Dorsolateral prefrontal cortex (tissue), 120 donors: ENCODE measurements at regions of chr1 and their contacts with region 1.

Region 1: GRCh38 chr1:116372587-116373444 is at the start of gene ATP1A1:
- DNase-seq: peak; percentile 96 to 99 (median 98)
- H3K4me3 ChIP-seq: peak within 1 kb of the TSS; percentile 53 to 97 (median 88)
- H3K27ac ChIP-seq: peak within 1 kb of the TSS; percentile 77 to 99 (median 95)
- H3K27me3 ChIP-seq: no peaks in the 10 kb centered on the region
- CTCF ChIP-seq: peak in 35 of 56 donors; percentile 3 to 51 (median 28)
- total RNA-seq, gene ATP1A1: 225 to 944 (median 658) TPM

Region 2: DNA sequence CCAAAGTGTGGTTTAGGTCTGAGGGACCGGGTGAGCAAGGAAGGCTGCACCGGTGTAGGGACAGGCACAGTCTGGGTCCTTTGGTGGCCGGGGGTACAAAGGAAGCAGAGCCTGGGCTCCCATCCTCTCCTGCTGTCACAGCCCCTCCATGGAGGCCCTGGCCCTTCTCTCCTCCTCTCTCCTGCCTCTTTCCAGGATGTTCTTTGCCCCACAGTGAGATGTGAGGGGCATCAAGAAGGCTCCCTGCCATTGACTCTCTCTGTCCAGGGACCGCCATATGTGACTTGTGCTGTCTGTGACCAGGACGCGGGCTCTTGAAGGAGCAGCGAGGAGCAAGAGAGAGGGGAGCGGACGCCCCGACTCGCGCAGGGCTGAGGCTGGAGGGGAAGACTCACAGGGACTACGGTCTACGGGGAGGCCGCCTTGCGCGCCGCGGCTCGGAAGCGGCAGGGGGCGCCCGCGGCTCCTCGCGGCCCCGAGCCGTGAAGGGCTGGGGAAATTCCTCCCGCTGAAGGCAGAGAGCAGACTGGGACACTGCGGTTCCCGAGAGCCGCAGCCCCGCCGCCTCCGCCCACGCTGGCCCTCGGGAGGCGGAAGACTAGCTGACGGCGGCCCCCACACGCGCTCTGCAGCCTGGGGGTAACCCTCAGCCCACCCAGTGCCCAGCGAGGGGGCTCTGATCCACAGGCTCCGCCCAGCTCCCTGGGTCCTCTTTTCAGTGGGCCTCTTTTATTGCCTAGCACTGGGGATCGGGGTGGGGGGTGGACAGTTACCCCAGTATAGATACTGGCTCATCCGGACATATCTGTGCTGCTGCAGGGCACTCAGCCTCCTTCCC is 220.9 kb before region 1 on chr1:
- intact Hi-C with region 1: loop called (anchors 5 kb)
- DNase-seq: peak in 9 of 10 donors; percentile 60 to 88 (median 76)
- H3K4me3 ChIP-seq: peak overlapping the region; percentile 29 to 73 (median 59)
- H3K27ac ChIP-seq: peak overlapping the region; percentile 66 to 97 (median 88)
- H3K27me3 ChIP-seq: no peaks in the 10 kb centered on the region
- CTCF ChIP-seq: peak; percentile 71 to 98 (median 94)

Region 3: DNA sequence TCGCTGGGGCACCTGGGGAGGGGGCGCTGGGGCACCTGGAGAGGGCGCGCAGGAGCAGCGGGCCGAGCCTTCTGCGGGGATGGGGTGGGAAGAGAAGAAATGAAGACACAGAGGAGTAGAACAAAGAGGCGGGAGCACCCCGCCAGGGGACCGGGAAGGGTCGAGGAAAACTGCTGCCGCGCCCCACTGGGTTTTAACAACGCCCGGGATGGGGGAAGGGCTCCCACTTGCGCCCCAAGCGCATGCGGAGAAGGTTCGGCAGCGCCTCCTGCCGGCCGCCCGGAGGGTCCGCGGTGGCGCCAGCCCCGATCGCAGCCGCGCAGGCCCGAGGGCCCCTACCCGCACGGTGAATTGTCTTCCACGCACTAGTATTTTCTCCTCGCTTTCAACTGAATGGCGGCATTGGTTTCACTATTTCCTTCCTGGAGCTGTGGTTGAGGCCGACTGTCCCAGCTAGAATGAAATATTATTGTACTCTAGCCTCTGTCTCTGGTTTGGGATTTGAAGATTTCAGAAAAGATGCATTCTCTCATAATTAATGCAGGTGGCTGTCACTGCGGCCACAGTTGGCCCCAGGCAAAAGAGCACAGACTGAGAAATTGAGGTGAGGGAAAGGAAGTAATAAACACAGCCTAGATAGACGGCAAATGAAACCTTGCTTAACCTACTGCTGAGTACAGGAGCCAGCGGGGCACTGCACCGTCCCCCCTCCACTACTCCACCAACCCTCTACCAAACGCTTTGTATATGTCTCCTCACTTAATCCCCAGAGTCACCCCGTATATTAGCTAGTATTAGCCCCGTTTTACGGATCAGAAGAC is 204.3 kb before region 1 on chr1:
- intact Hi-C with region 1: loop called in 1 of 2 experiments (anchors 5 kb)
- DNase-seq: peak in 9 of 10 donors; percentile 53 to 90 (median 76)
- H3K4me3 ChIP-seq: peak overlapping the region; percentile 36 to 80 (median 66)
- H3K27ac ChIP-seq: peak overlapping the region; percentile 59 to 96 (median 87)
- H3K27me3 ChIP-seq: no peaks in the 10 kb centered on the region
- CTCF ChIP-seq: peak; percentile 83 to 99 (median 97)

Region 4: GRCh38 chr1:116311756-116312691 is 60.8 kb before region 1 on chr1:
- intact Hi-C with region 1: loop called in 1 of 2 experiments (anchors 10 kb)
- DNase-seq: peak in 9 of 10 donors; percentile 10 to 77 (median 58)
- H3K4me3 ChIP-seq: no peak overlapping the region
- H3K27ac ChIP-seq: peak overlapping the region in 57 of 59 donors; percentile 4 to 87 (median 69)
- H3K27me3 ChIP-seq: no peaks in the 10 kb centered on the region
- CTCF ChIP-seq: peak in 2 of 56 donors; percentile 11 to 17

Region 5: DNA sequence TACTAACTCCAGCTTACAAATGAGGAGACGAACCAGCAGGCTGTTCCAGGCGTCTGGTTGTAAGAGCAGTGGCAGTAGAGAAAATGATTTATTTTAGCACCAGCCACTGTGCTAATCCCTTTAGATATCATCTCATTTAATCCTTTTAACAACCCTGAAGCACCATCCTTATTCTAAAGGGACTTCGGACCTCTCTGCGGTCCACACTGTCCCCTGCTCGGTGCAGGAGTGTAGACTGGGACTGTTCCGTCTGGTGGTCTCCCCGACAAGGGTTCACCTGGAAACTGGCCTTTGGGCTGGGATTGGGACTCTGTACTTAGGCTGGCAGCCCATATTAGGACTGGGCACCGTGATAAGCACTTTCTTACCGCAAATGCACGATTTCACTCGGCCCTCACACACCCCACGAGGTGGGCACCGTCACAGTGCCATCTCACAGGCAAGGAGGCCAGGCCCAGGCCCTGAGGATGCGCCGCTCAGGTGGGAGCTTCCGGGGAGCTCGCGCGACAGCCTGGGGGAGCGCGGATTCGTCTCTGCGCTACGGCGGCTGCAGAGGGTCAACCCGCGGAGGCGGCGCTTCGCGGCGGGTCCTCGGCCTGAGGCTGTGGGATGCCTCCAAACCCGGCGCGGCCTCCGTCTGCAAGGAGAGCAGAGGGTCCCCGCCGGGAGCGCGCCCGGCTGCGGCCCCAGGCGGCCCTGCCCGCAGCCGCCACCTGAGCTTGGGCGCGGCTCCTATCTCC is 45.4 kb after region 1 on chr1:
- intact Hi-C with region 1: loop called (anchors 5 kb)
- DNase-seq: peak; percentile 70 to 89 (median 76)
- H3K4me3 ChIP-seq: peak overlapping the region; percentile 60 to 95 (median 82)
- H3K27ac ChIP-seq: peak overlapping the region; percentile 48 to 98 (median 94)
- H3K27me3 ChIP-seq: no peaks in the 10 kb centered on the region
- CTCF ChIP-seq: peak in 40 of 56 donors; percentile 7 to 55 (median 36)

Region 6: GRCh38 chr1:116433275-116434257 is 60.8 kb after region 1 on chr1:
- intact Hi-C with region 1: loop called in 1 of 2 experiments (anchors 5 kb)
- DNase-seq: peak; percentile 58 to 97 (median 92)
- H3K4me3 ChIP-seq: peak overlapping the region in 8 of 59 donors; percentile 8 to 30 (median 22)
- H3K27ac ChIP-seq: peak overlapping the region; percentile 80 to 99 (median 95)
- H3K27me3 ChIP-seq: no peaks in the 10 kb centered on the region
- CTCF ChIP-seq: peak in 12 of 56 donors; percentile 2 to 32 (median 17)

Region 7: GRCh38 chr1:116485071-116485735 is 112.4 kb after region 1 on chr1:
- intact Hi-C with region 1: loop called (anchors 5 kb)
- DNase-seq: peak; percentile 83 to 91 (median 89)
- H3K4me3 ChIP-seq: no peak overlapping the region
- H3K27ac ChIP-seq: peak overlapping the region in 20 of 59 donors; percentile 8 to 71 (median 41)
- H3K27me3 ChIP-seq: no peaks in the 10 kb centered on the region
- CTCF ChIP-seq: peak; percentile 88 to 100 (median 97)